CD4-positive, alpha-beta memory T cell (primary cell): ENCODE measurements at regions of chr6 and their contacts with region 1.

Region 1: DNA sequence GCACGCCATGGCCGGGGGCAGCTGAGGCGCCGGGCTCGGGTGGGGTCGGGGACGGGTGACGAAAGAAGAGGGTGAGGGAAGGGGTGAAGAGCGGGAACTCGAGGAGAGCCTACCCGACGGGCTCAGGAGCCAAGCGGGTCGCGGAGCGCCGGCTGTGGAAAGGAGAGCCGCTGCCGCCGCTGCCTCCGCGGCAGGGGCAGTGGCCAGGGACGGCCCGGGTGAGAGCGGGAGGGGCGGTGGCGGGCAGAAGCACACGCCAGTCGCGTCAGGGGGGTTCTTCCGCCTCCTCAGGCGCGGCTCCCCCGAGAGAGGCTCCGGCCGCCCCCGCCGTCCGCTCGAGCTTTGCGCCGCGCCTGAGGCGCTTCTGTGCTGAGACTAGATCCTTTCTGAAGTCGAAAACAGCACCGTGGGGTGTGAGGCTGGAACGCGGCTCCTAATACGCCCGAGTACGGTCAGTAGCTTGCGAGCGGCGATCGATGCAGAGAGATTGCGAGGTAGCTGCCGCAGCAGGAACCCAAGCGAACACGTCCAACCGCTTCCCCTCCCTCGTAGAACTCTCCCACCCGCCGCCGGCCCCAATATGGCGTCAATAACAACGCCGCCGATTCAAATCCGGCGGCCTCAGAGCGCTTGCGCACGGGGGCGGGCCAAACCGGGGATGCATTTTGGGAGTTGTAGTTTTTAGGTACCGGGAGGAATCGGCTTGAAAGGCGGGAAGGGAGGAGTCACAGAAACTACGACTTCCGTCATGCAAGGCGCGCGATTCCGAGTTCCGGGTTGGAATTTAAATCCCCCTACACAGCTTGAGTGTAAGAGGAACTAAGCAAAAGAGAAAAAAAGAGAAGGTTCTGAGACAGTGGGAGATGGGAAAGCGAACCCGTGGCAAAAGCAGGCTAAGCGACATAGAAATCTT is at the start of gene AKIRIN2:
- DNase-seq: peak; percentile 97 to 99 (median 99)
- H3K4me3 ChIP-seq: peak within 1 kb of the TSS; percentile 57 to 91
- H3K4me3 Mint-ChIP-seq: peak within 1 kb of the TSS; percentile 94 to 99 (median 96)
- H3K27ac ChIP-seq: peak within 1 kb of the TSS; percentile 93
- H3K27ac Mint-ChIP-seq: peak within 1 kb of the TSS; percentile 89 to 97 (median 97)
- H3K4me1 ChIP-seq: peaks cover 39% of the 10 kb centered on the region
- H3K4me1 Mint-ChIP-seq: peaks cover 24 to 58% (median 34%) of the 10 kb centered on the region in 4 donors
- H3K27me3 ChIP-seq: no peaks in the 10 kb centered on the region
- H3K27me3 Mint-ChIP-seq: no peaks in the 10 kb centered on the region
- total RNA-seq, gene AKIRIN2: 68.6 to 69.8 TPM

Region 2: GRCh38 chr6:87154993-87155841 is 546.7 kb before region 1 on chr6 and contains the start of gene ZNF292:
- CTCF ChIA-PET with region 1: no interaction called
- POLR2A ChIA-PET with region 1: interaction called, 9 read pairs
- intact Hi-C with region 1: loop called (anchors 5 kb)
- DNase-seq: peak; percentile 92 to 96 (median 93)
- H3K4me3 ChIP-seq: peak within 1 kb of the TSS; percentile 54 to 93
- H3K4me3 Mint-ChIP-seq: peak within 1 kb of the TSS; percentile 91 to 100 (median 96)
- H3K27ac ChIP-seq: peak within 1 kb of the TSS; percentile 91
- H3K27ac Mint-ChIP-seq: peak within 1 kb of the TSS; percentile 92 to 99 (median 96)
- H3K4me1 ChIP-seq: peaks cover 73% of the 10 kb centered on the region
- H3K4me1 Mint-ChIP-seq: peaks cover 38 to 70% (median 51%) of the 10 kb centered on the region in 4 donors
- H3K27me3 ChIP-seq: no peaks in the 10 kb centered on the region
- H3K27me3 Mint-ChIP-seq: no peaks in the 10 kb centered on the region
- total RNA-seq, gene ZNF292: 74.8 to 82.1 TPM

Region 3: GRCh38 chr6:87393022-87393622 is 308.8 kb before region 1 on chr6:
- CTCF ChIA-PET with region 1: no interaction called
- POLR2A ChIA-PET with region 1: no interaction called
- intact Hi-C with region 1: no loop called
- DNase-seq: peak; percentile 51 to 62 (median 59)
- H3K4me3 ChIP-seq: no peak overlapping the region
- H3K4me3 Mint-ChIP-seq: no peak overlapping the region
- H3K27ac ChIP-seq: no peak overlapping the region
- H3K27ac Mint-ChIP-seq: no peak overlapping the region
- H3K4me1 ChIP-seq: no peaks in the 10 kb centered on the region
- H3K4me1 Mint-ChIP-seq: peaks cover 0 to 2% (median 0%) of the 10 kb centered on the region in 4 donors
- H3K27me3 ChIP-seq: no peaks in the 10 kb centered on the region
- H3K27me3 Mint-ChIP-seq: no peaks in the 10 kb centered on the region

Region 4: GRCh38 chr6:87589693-87590549 is 112.0 kb before region 1 on chr6 and contains the starts of genes ORC3 and RARS2:
- CTCF ChIA-PET with region 1: no interaction called
- POLR2A ChIA-PET with region 1: interaction called, 25 read pairs
- intact Hi-C with region 1: loop called (anchors 1 kb)
- DNase-seq: peak; percentile 91 to 95 (median 93)
- H3K4me3 ChIP-seq: peak within 1 kb of the TSS; percentile 80 to 97
- H3K4me3 Mint-ChIP-seq: peak within 1 kb of the TSS; percentile 94 to 97 (median 96)
- H3K27ac ChIP-seq: peak within 1 kb of the TSS; percentile 84
- H3K27ac Mint-ChIP-seq: peak within 1 kb of the TSS; percentile 87 to 98 (median 95)
- H3K4me1 ChIP-seq: peaks cover 49% of the 10 kb centered on the region
- H3K4me1 Mint-ChIP-seq: peaks cover 44 to 75% (median 56%) of the 10 kb centered on the region in 4 donors
- H3K27me3 ChIP-seq: no peaks in the 10 kb centered on the region
- H3K27me3 Mint-ChIP-seq: no peaks in the 10 kb centered on the region
- total RNA-seq, gene ORC3: 30.4 to 30.7 TPM
- total RNA-seq, gene RARS2: 38.8 to 39.3 TPM

Region 5: GRCh38 chr6:87714093-87714809 is 12.3 kb after region 1 on chr6:
- CTCF ChIA-PET with region 1: interaction called, 4 read pairs
- POLR2A ChIA-PET with region 1: interaction called, 26 read pairs
- intact Hi-C with region 1: no loop called
- DNase-seq: no peak
- H3K4me3 ChIP-seq: no peak overlapping the region
- H3K4me3 Mint-ChIP-seq: no peak overlapping the region
- H3K27ac ChIP-seq: no peak overlapping the region
- H3K27ac Mint-ChIP-seq: no peak overlapping the region
- H3K4me1 ChIP-seq: peaks cover 11% of the 10 kb centered on the region
- H3K4me1 Mint-ChIP-seq: peaks cover 7 to 15% (median 14%) of the 10 kb centered on the region in 4 donors
- H3K27me3 ChIP-seq: no peaks in the 10 kb centered on the region
- H3K27me3 Mint-ChIP-seq: no peaks in the 10 kb centered on the region

Region 6: GRCh38 chr6:87742106-87742505 is 40.2 kb after region 1 on chr6:
- CTCF ChIA-PET with region 1: interaction called, 3 read pairs
- POLR2A ChIA-PET with region 1: interaction called, 109 read pairs
- intact Hi-C with region 1: loop called (anchors 1 kb)
- DNase-seq: peak; percentile 63 to 83 (median 78)
- H3K4me3 ChIP-seq: no peak overlapping the region
- H3K4me3 Mint-ChIP-seq: peak overlapping the region in 7 of 8 donors; percentile 35 to 72 (median 46)
- H3K27ac ChIP-seq: no peak overlapping the region
- H3K27ac Mint-ChIP-seq: peak overlapping the region; percentile 83 to 95 (median 94)
- H3K4me1 ChIP-seq: peaks cover 49% of the 10 kb centered on the region
- H3K4me1 Mint-ChIP-seq: peaks cover 33 to 52% (median 43%) of the 10 kb centered on the region in 4 donors
- H3K27me3 ChIP-seq: no peaks in the 10 kb centered on the region
- H3K27me3 Mint-ChIP-seq: no peaks in the 10 kb centered on the region

Region 7: DNA sequence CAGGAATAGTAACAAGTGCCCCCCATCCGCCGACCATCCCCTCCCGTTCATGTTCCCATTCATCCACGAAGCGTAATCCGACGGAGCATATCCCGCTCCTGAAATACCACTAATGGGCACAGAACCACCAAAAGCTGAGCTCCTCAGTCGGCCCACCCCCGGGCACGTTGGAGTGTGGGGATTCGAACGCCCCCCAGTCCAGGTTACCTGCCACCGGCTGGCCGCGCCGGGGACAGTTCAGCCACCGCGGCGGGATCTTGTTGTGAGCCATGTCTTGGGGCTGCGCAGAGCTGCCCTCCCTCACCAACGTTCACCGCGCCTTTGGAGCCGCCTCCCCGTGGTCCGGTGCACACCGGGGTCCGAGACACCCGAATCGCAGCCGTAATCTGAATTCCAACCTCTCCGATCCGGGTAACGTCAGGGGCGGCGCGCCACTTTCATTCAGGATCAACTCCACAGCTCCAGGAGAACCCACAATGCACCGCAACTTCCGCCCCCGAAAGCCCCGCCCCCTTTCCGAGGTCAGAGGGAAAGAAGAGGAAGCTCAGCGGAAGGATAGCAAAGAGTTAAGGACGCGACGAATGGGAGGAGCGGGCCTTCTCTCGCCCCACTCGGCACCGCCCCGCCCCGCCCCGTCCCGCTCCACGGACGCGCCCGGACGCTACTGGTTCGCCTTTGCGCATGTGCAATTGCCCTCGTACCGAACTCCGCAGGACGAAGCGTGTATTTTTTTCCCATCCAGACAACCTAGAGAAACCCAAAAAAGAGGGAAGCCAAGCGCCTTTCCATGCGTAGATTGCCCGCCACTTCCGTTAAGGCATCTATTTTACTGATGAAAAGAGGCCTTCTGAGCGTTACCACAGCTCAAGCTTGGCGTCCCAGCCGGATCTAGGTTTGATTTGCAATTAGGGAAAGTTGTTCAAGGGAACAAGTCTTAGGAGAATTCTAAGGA is 1261.5 kb after region 1 on chr6 and contains the start of gene RNGTT:
- CTCF ChIA-PET with region 1: no interaction called
- POLR2A ChIA-PET with region 1: no interaction called
- intact Hi-C with region 1: loop called (anchors 5 kb)
- DNase-seq: peak; percentile 95 to 96 (median 96)
- H3K4me3 ChIP-seq: peak within 1 kb of the TSS; percentile 79 to 99
- H3K4me3 Mint-ChIP-seq: peak within 1 kb of the TSS; percentile 90 to 99 (median 98)
- H3K27ac ChIP-seq: peak within 1 kb of the TSS; percentile 68
- H3K27ac Mint-ChIP-seq: peak within 1 kb of the TSS; percentile 88 to 98 (median 97)
- H3K4me1 ChIP-seq: peaks cover 30% of the 10 kb centered on the region
- H3K4me1 Mint-ChIP-seq: peaks cover 27 to 56% (median 34%) of the 10 kb centered on the region in 4 donors
- H3K27me3 ChIP-seq: no peaks in the 10 kb centered on the region
- H3K27me3 Mint-ChIP-seq: no peaks in the 10 kb centered on the region
- total RNA-seq, gene RNGTT: 17.4 to 21.8 TPM